ENCODE measurements at regions of chr16 and their contacts with region 1.

Region 1: GRCh38 chr16:55711959-55712876 is 56.4 kb downstream of the SLC6A2 start:
- DNase-seq: peak; percentile 63 to 89
- H3K4me3 ChIP-seq: no peak overlapping the region
- CTCF ChIP-seq: no peak
- POLR2A ChIP-seq: no peak

Region 2: GRCh38 chr16:55842369-55843104 is 130.3 kb after region 1 on chr16:
- intact Hi-C with region 1: loop called (anchors 1 kb)
- DNase-seq: no peak
- H3K4me3 ChIP-seq: no peak overlapping the region
- CTCF ChIP-seq: peak in 1 of 3 donors; percentile 35
- POLR2A ChIP-seq: no peak